ENCODE measurements at regions of chr9 and their contacts with region 1.

Region 1: DNA sequence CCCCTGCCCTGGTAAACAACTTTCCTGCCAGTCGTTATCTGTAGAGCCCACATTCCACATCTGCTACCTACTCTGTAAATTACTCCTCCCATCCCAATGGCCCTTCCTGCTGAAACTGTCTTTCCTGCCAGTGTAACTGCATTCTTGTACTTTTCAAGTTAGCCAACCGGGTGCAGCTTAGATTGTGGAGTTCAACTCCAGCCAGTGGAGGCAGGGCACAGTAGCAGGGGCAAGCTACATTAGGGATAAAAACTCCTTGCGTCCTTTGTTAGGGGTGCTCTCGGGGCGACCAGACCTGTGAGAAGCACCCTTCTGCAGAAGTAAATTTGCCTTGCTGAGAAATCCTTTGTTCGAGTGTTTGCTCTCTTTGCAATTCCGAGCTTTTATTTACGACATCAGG is 639.0 kb upstream of the TYRP1 start:
- DNase-seq: no peak
- ATAC-seq: no peak
- H3K4me3 ChIP-seq: no peak overlapping the region
- H3K27ac ChIP-seq: no peak overlapping the region
- H3K4me1 ChIP-seq: no peaks in the 10 kb centered on the region
- H3K27me3 ChIP-seq: no peaks in the 10 kb centered on the region
- CTCF ChIP-seq: no peak

Region 2: DNA sequence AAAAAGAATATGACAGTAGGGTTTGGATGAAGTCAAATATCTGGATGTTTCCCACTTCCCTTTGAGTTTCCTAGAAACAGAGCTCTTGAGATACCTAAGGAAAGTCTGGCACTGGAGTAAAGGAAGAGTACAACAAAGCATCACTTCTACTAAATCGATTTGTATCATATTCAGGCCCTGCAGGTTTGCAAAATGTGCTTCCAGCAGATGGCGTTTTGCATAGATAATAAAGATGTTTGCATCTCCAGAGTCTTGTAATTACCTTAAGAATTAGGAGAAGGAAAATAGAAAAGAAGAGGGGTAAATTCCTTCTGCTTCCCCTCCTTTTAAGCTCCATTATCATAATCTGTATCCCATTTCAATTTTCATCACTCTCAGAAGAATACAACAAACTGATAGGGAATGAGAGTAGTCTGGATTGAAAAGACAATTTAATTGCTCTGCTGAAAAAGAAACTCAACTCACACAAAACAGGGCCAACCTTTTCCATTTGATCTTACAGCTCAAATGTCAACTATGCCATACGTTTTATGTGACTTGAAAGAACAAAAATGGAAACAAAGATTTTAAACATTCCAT is 1821.8 kb before region 1 on chr9:
- CTCF ChIA-PET with region 1: no interaction called
- POLR2A ChIA-PET with region 1: no interaction called
- intact Hi-C with region 1: loop called (anchors 10 kb)
- DNase-seq: peak; percentile 5
- ATAC-seq: peak; percentile 43; the same call in 1 of the 2 replicates
- H3K4me3 ChIP-seq: no peak overlapping the region
- H3K27ac ChIP-seq: no peak overlapping the region
- H3K4me1 ChIP-seq: no peaks in the 10 kb centered on the region
- H3K27me3 ChIP-seq: no peaks in the 10 kb centered on the region
- CTCF ChIP-seq: peak; percentile 37; the same call in 1 of the 2 replicates

Region 3: GRCh38 chr9:12464910-12465512 is 410.8 kb after region 1 on chr9:
- CTCF ChIA-PET with region 1: no interaction called
- POLR2A ChIA-PET with region 1: no interaction called
- intact Hi-C with region 1: no loop called
- DNase-seq: peak; percentile 46
- ATAC-seq: no peak
- H3K4me3 ChIP-seq: no peak overlapping the region
- H3K27ac ChIP-seq: no peak overlapping the region
- H3K4me1 ChIP-seq: no peaks in the 10 kb centered on the region
- H3K27me3 ChIP-seq: no peaks in the 10 kb centered on the region
- CTCF ChIP-seq: peak; percentile 76